Gastrocnemius medialis (tissue), 4 donors: ENCODE measurements at regions of chr3 and their contacts with region 1.

Region 1: DNA sequence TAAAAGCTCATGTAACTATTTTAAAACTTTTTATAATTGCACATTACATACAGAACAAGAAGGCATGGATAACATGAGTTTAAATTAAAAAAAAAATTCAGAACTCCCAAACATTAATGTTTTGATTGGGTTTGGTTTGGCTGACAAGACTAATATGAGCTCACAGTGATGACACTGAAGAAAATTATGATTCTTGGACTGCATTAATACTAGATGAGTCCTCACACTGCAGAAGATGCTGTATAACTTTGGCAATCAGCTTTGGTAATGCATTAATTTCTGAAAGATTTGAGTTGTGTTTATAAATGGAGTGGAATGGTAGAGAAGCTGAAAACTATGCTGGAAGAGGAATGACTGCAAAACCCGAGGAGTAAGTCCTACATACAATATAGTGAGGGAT is 358.9 kb downstream of the PLCL2 start:
- DNase-seq: no peak
- ATAC-seq: no peak
- H3K4me3 ChIP-seq: no peak overlapping the region
- H3K27ac ChIP-seq: no peak overlapping the region
- H3K4me1 ChIP-seq: no peaks in the 10 kb centered on the region
- H3K27me3 ChIP-seq: no peaks in the 10 kb centered on the region
- CTCF ChIP-seq: no peak
- POLR2A ChIP-seq: no peak

Region 2: GRCh38 chr3:16589867-16590624 is 653.6 kb before region 1 on chr3:
- in situ Hi-C with region 1: loop called (anchors 5 to 10 kb)
- intact Hi-C with region 1: no loop called
- DNase-seq: no peak
- ATAC-seq: no peak
- H3K4me3 ChIP-seq: no peak overlapping the region
- H3K27ac ChIP-seq: no peak overlapping the region
- H3K4me1 ChIP-seq: no peaks in the 10 kb centered on the region
- H3K27me3 ChIP-seq: no peaks in the 10 kb centered on the region
- CTCF ChIP-seq: no peak
- POLR2A ChIP-seq: no peak

Region 3: GRCh38 chr3:16618721-16619120 is 624.9 kb before region 1 on chr3:
- in situ Hi-C with region 1: loop called in 1 of 4 experiments (anchors 10 kb)
- intact Hi-C with region 1: no loop called
- DNase-seq: no peak
- ATAC-seq: no peak
- H3K4me3 ChIP-seq: no peak overlapping the region
- H3K27ac ChIP-seq: no peak overlapping the region
- H3K4me1 ChIP-seq: no peaks in the 10 kb centered on the region
- H3K27me3 ChIP-seq: no peaks in the 10 kb centered on the region
- CTCF ChIP-seq: no peak
- POLR2A ChIP-seq: no peak